ENCODE measurements at regions of chr2 and their contacts with region 1.

Region 1: GRCh38 chr2:164061129-164061746 is 325.4 kb upstream of the FIGN start:
- DNase-seq: no peak
- H3K4me3 ChIP-seq: no peak overlapping the region
- CTCF ChIP-seq: no peak
- POLR2A ChIP-seq: no peak

Region 2: DNA sequence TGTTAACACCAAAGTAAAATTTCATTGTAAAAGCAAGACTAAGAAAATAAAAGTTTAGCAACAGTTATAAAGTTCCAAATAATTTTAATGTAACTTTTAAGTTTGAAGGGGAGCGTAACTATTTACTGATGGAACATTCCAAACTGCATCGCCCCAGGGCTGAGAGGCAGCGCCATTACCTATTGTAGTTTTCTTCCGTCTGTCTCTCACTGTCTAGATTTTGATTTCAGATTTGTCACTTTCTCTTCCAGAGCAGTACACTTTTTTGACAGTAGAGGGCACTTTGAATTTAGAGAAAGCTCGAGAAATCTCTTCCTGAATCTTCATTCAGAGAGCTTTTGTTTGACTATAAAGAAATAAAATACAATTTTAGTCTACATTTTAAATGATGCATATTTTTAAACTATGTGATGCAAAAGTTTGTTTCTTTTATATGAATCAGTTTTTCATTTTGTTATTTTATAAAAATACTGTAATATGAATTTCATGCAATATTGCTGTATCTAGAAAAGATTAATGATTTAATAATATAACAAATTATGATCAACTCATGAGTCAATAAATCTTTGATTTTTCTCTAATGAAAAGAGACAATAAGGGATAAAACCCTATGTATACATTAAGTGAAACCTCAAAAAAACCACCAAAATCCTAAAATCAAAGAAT is 715.2 kb before region 1 on chr2:
- intact Hi-C with region 1: loop called (anchors 10 kb)
- DNase-seq: no peak
- H3K4me3 ChIP-seq: no peak overlapping the region
- CTCF ChIP-seq: peak in 1 of 3 donors; percentile 35
- POLR2A ChIP-seq: no peak